Mammary epithelial cell (primary cell): ENCODE measurements at regions of chr12 and their contacts with region 1.

Region 1: GRCh38 chr12:116799955-116800354 is 61.8 kb downstream of the RNFT2 start:
- DNase-seq: no peak
- H3K4me3 ChIP-seq: no peak overlapping the region
- H3K27ac ChIP-seq: no peak overlapping the region
- H3K4me1 ChIP-seq: no peaks in the 10 kb centered on the region
- H3K27me3 ChIP-seq: peaks cover 3% of the 10 kb centered on the region
- CTCF ChIP-seq: no peak

Region 2: DNA sequence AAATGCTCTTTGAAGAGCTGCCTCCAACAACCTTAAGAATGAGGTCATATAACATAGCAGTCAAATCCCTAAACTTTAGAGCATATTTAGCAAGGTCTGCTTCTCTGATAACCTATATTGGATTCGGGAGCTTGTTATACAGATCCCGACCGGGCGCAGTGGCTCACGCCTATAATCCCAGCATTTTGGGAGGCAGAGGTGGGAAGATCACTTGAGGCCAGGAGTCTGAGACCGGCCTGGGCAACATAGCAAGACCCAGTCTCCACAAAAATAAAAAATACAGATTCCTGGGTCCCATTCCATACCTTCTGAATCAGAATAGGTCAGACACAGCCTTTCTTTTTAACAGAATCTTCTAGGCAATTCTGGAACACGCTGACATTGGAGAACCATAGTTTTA is 108.8 kb before region 1 on chr12:
- CTCF ChIA-PET with region 1: interaction called, 10 read pairs
- dilution Hi-C with region 1: no loop called
- in situ Hi-C with region 1: no loop called
- intact Hi-C with region 1: no loop called
- DNase-seq: no peak
- H3K4me3 ChIP-seq: no peak overlapping the region
- H3K27ac ChIP-seq: no peak overlapping the region
- H3K4me1 ChIP-seq: no peaks in the 10 kb centered on the region
- H3K27me3 ChIP-seq: peaks cover 8% of the 10 kb centered on the region
- CTCF ChIP-seq: no peak

Region 3: DNA sequence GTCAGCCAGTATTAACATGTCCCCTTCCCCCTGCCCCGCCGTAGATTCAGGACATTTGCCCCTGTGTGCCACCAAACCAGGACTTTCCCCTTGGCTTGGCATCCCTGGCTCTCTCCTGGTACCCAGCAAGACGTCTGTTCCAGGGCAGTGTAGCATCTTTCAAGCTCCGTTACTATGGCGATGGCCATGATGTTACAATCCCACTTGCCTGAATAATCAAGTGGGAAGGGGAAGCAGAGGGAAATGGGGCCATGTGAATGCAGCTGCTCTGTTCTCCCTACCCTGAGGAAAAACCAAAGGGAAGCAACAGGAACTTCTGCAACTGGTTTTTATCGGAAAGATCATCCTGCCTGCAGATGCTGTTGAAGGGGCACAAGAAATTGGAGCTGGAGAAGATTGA is 52.3 kb after region 1 on chr12:
- CTCF ChIA-PET with region 1: no interaction called
- dilution Hi-C with region 1: no loop called
- in situ Hi-C with region 1: no loop called
- intact Hi-C with region 1: no loop called
- DNase-seq: no peak
- H3K4me3 ChIP-seq: no peak overlapping the region
- H3K27ac ChIP-seq: no peak overlapping the region
- H3K4me1 ChIP-seq: no peaks in the 10 kb centered on the region
- H3K27me3 ChIP-seq: peaks cover 2% of the 10 kb centered on the region
- CTCF ChIP-seq: no peak